Heart right ventricle (tissue), 16 donors: ENCODE measurements at regions of chr11 and their contacts with region 1.

Region 1: DNA sequence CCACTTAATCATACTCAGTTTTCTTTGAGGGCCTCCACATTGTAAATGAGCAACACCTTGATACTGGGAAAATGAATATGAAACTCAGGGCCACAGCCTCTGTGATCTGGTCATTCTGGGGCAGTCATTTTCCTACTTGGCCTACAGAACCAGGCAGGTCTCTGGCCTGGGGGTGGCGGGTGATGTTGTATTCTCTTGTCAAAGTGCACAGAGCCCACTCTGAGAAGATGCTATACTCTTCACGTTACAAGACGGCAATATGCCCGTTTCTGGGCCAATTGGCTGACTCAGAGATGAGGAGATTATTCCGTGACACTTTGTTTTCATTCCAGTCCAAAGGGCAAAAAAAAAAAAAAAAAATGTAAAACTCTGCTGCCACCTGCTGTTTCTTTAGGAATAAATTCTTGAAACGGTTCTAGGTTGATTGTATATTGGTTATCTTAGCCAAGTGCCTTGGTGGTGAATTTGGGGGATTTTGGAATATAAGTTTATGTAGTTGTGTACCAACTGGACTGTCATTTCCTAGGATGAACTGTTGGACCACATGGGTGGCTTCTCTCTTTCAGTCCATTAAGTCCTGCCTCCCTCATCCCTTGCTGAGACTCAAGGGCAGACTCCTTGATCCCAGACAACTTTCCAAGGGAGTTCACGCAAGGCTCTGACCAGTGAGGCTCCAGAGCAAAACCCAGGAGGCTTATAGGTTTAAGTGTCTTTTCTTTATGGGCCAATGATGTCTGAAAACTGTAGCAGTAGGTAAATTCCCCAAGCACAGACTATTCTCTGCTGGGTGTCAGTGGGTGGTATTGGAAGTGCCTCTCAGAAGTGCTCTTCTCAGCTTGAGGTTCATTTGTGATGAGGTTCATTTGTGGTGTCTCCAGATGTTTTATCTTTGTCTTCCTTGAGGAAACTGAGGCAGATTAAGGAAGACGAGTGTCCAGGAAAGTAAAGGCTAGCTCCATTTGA is 18.2 kb downstream of the ADM start:
- DNase-seq: peak in 1 of 2 donors; percentile 46
- ATAC-seq: peak; percentile 23 to 65 (median 59)
- H3K4me3 ChIP-seq: no peak overlapping the region
- H3K27ac ChIP-seq: peak overlapping the region in 5 of 10 donors; percentile 17 to 59 (median 25)
- H3K4me1 ChIP-seq: peaks cover 5 to 58% (median 34%) of the 10 kb centered on the region in 9 donors
- H3K27me3 ChIP-seq: no peaks in the 10 kb centered on the region
- CTCF ChIP-seq: peak; percentile 33 to 75 (median 62)

Region 2: DNA sequence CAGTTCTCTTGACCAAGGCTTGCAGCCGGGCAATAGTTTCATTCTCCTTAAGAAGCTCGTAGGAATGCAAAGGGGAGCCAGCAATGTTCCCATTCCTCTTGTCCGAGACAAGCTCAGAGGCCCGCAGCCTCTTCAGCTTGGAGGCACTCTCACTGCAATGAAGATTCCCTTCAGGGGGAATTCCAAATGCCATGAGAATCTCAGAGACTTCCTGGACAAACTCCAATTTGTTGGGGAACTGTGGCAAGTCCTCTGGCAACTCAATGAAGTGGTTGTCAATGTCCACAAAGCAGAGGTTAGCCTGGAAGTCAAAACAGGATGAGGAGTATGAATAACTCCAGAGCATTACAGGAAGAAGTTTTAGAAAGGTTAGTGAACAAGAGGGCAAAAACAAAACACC is 1142.3 kb before region 1 on chr11:
- intact Hi-C with region 1: no loop called
- DNase-seq: no peak
- ATAC-seq: peak in 5 of 8 donors; percentile 17 to 70 (median 27)
- H3K4me3 ChIP-seq: no peak overlapping the region
- H3K27ac ChIP-seq: peak overlapping the region in 3 of 10 donors; percentile 1 to 48 (median 26)
- H3K4me1 ChIP-seq: peaks cover 0 to 20% (median 7%) of the 10 kb centered on the region in 9 donors
- H3K27me3 ChIP-seq: no peaks in the 10 kb centered on the region
- CTCF ChIP-seq: no peak

Region 3: GRCh38 chr11:9527481-9528140 is 795.5 kb before region 1 on chr11:
- intact Hi-C with region 1: loop called in 1 of 10 experiments (anchors 10 kb)
- DNase-seq: peak in 1 of 2 donors; percentile 33
- ATAC-seq: peak in 7 of 8 donors; percentile 34 to 72 (median 58)
- H3K4me3 ChIP-seq: no peak overlapping the region
- H3K27ac ChIP-seq: peak overlapping the region in 4 of 10 donors; percentile 2 to 51 (median 12)
- H3K4me1 ChIP-seq: peaks cover 2 to 32% (median 18%) of the 10 kb centered on the region in 9 donors
- H3K27me3 ChIP-seq: no peaks in the 10 kb centered on the region
- CTCF ChIP-seq: no peak

Region 4: GRCh38 chr11:9861860-9862725 is 461.0 kb before region 1 on chr11:
- intact Hi-C with region 1: loop called in 8 of 10 experiments (anchors 5 to 10 kb)
- DNase-seq: peak; percentile 13 to 39
- ATAC-seq: peak in 7 of 8 donors; percentile 77 to 90 (median 82)
- H3K4me3 ChIP-seq: no peak overlapping the region
- H3K27ac ChIP-seq: no peak overlapping the region
- H3K4me1 ChIP-seq: peaks cover 0 to 19% (median 13%) of the 10 kb centered on the region in 9 donors
- H3K27me3 ChIP-seq: no peaks in the 10 kb centered on the region
- CTCF ChIP-seq: peak; percentile 53 to 85 (median 74)

Region 5: GRCh38 chr11:9972989-9973388 is 350.1 kb before region 1 on chr11:
- intact Hi-C with region 1: loop called in 1 of 10 experiments (anchors 5 kb)
- DNase-seq: peak in 1 of 2 donors; percentile 9
- ATAC-seq: peak; percentile 47 to 82 (median 71)
- H3K4me3 ChIP-seq: no peak overlapping the region
- H3K27ac ChIP-seq: no peak overlapping the region
- H3K4me1 ChIP-seq: peaks cover 0 to 22% (median 16%) of the 10 kb centered on the region in 9 donors
- H3K27me3 ChIP-seq: no peaks in the 10 kb centered on the region
- CTCF ChIP-seq: peak; percentile 40 to 82 (median 72)

Region 6: DNA sequence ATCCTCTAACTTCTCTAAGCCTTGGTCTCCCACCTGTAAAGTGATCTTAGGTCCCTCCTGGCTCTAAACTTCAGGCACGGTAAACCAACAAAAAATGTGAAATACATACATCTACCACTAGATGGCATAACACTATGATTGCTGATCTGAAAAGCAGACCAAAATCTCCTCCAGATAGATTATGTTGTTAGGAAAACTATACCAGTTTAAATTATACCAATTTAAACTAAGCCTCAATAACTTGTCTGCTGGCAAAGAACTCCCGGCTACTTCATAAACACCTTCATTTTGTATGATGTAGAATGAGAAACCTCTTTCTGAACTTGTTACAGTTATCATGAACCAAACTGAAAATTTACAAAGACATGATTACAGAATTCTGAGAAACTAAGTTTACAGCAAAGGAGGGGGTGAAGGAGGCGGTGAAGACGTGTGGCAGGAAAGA is 115.0 kb before region 1 on chr11:
- intact Hi-C with region 1: loop called in 2 of 10 experiments (anchors 5 kb)
- DNase-seq: no peak
- ATAC-seq: peak in 6 of 8 donors; percentile 42 to 63 (median 54)
- H3K4me3 ChIP-seq: no peak overlapping the region
- H3K27ac ChIP-seq: no peak overlapping the region
- H3K4me1 ChIP-seq: peaks cover 0 to 26% (median 14%) of the 10 kb centered on the region in 9 donors
- H3K27me3 ChIP-seq: no peaks in the 10 kb centered on the region
- CTCF ChIP-seq: peak; percentile 62 to 82 (median 74)

Region 7: DNA sequence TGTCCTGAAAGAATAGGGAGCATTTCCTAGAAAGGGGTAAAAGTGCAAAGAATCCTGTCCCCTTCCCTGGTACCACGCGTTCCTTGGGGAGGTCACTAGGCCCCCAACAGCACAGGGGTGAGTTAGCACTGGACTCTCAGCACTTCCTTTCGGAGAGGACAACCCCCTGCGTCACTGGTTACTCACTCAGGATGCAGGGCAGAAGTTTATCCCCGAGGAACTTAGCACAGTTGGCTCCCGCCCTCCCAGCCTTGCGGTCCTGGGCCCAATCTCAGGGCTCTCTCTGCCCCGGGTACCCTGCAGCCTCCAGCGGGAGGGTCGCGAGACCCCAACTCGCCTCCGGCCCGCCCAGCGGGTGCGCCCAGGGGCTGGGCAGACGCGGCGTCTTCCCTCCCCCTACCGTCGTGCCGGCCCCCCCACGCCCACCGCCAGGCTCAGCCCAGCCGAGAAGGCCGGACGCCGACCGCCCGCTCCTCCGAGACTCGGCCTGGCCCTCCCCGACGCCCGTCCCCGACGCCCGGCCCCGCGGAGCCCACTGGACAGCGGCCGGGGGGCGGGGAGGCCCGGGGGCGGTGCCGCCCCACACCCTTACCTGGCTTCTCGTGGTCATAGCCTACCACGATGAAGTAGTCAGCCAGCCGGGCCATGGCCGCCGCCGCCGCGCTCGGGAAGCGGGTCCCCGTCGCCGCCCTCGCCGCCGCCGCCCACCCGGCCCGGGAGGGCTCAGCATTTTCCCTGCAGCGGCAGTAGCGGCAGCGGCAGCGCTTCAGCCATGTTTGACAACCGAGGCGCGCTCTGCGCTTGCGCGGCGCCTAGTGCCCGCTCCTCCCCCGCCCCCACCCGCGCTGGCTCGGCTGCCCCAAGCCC is 29.5 kb before region 1 on chr11 and contains the start of gene SBF2:
- intact Hi-C with region 1: no loop called
- DNase-seq: peak; percentile 87 to 90
- ATAC-seq: peak; percentile 91 to 96 (median 93)
- H3K4me3 ChIP-seq: peak within 1 kb of the TSS; percentile 70 to 99 (median 94)
- H3K27ac ChIP-seq: peak within 1 kb of the TSS; percentile 94 to 99 (median 97)
- H3K4me1 ChIP-seq: peaks cover 0 to 63% (median 24%) of the 10 kb centered on the region in 9 donors
- H3K27me3 ChIP-seq: no peaks in the 10 kb centered on the region
- CTCF ChIP-seq: no peak
- total RNA-seq, gene SBF2: 16.2 to 27.1 (median 21.2) TPM

Region 8: GRCh38 chr11:10387206-10388083 is 64.3 kb after region 1 on chr11:
- intact Hi-C with region 1: no loop called
- DNase-seq: peak in 1 of 2 donors; percentile 43
- ATAC-seq: peak; percentile 59 to 75 (median 67)
- H3K4me3 ChIP-seq: no peak overlapping the region
- H3K27ac ChIP-seq: peak overlapping the region in 3 of 10 donors; percentile 11 to 36 (median 36)
- H3K4me1 ChIP-seq: peaks cover 0 to 22% (median 7%) of the 10 kb centered on the region in 9 donors
- H3K27me3 ChIP-seq: no peaks in the 10 kb centered on the region
- CTCF ChIP-seq: no peak